CD14-positive monocyte (primary cell): ENCODE measurements at regions of chr2 and their contacts with region 1.

Region 1: GRCh38 chr2:19362755-19363473 is 4.5 kb upstream of the OSR1 start:
- DNase-seq: peak; percentile 30 to 57 (median 36)
- H3K4me3 ChIP-seq: peak overlapping the region; percentile 73 to 97 (median 95)
- H3K4me3 Mint-ChIP-seq: peak overlapping the region; percentile 96 to 100
- H3K27ac ChIP-seq: no peak overlapping the region
- H3K27ac Mint-ChIP-seq: peak overlapping the region in 2 of 7 donors; percentile 44 to 88
- H3K4me1 ChIP-seq: peaks cover 20 to 26% of the 10 kb centered on the region in 2 donors
- H3K4me1 Mint-ChIP-seq: peaks cover 35% of the 10 kb centered on the region
- H3K27me3 ChIP-seq: peaks cover 78 to 92% of the 10 kb centered on the region in 2 donors
- H3K27me3 Mint-ChIP-seq: peaks cover 86 to 96% (median 91%) of the 10 kb centered on the region in 3 donors
- CTCF ChIP-seq: peak; percentile 75

Region 2: GRCh38 chr2:18520451-18521425 is 842.2 kb before region 1 on chr2:
- intact Hi-C with region 1: loop called in 1 of 2 experiments (anchors 10 kb)
- DNase-seq: peak; percentile 36 to 42 (median 39)
- H3K4me3 ChIP-seq: no peak overlapping the region
- H3K4me3 Mint-ChIP-seq: no peak overlapping the region
- H3K27ac ChIP-seq: no peak overlapping the region
- H3K27ac Mint-ChIP-seq: peak overlapping the region in 1 of 7 donors; percentile 36
- H3K4me1 ChIP-seq: no peaks in the 10 kb centered on the region
- H3K4me1 Mint-ChIP-seq: no peaks in the 10 kb centered on the region
- H3K27me3 ChIP-seq: no peaks in the 10 kb centered on the region
- H3K27me3 Mint-ChIP-seq: peaks cover 0 to 10% (median 9%) of the 10 kb centered on the region in 3 donors
- CTCF ChIP-seq: peak; percentile 84

Region 3: DNA sequence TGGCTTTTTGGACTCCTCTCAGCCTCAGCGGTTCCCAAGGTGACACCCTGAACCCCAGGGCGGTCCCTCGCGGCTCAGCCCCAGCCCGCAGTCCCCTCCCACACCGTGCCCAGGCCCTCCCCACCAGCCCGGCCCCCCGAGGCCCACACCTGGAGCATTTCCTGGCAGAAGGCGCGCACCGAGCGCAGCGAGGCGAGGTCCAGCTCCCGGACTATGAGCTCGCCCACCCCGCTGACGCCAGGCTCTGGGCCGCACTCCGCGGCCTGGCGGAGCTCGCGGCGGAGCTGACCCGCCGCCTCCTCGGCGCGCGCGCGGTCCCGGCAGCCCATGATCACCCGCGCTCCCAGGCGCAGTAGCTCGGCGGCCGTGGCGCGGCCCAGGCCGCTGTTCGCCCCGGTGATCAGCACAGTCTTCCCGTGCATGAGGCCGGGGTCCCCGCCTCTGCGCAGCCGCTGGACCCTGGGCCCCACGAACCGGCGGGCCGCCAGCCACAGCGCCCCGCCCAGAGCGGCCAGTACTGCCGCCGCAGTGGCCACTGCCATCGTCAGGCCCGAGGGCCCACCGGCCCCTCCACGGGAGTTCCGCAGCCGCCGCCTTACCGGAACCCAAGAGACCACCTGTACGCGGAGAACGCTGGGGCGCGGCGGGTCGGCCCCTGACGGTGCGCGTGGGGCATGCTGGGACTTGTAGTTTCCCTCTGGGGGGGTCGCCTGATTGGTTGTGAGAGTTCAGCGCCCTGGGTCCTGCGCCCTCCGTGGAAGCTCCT is 802.7 kb before region 1 on chr2 and contains the start of gene RDH14:
- intact Hi-C with region 1: loop called in 1 of 2 experiments (anchors 10 kb)
- DNase-seq: peak; percentile 66 to 81 (median 69)
- H3K4me3 ChIP-seq: peak within 1 kb of the TSS; percentile 67 to 93 (median 91)
- H3K4me3 Mint-ChIP-seq: peak within 1 kb of the TSS; percentile 92 to 94
- H3K27ac ChIP-seq: peak within 1 kb of the TSS; percentile 43 to 83
- H3K27ac Mint-ChIP-seq: peak within 1 kb of the TSS; percentile 50 to 93 (median 88)
- H3K4me1 ChIP-seq: peaks cover 11 to 16% of the 10 kb centered on the region in 2 donors
- H3K4me1 Mint-ChIP-seq: peaks cover 19% of the 10 kb centered on the region
- H3K27me3 ChIP-seq: no peaks in the 10 kb centered on the region
- H3K27me3 Mint-ChIP-seq: peaks cover 0 to 3% (median 2%) of the 10 kb centered on the region in 3 donors
- CTCF ChIP-seq: no peak
- polyA plus RNA-seq, gene RDH14: 5.5 to 16.3 (median 14.3) TPM